ENCODE measurements at regions of chr10 and their contacts with region 1.

Region 1: GRCh38 chr10:117112220-117112619 is 25.9 kb downstream of the VAX1 start:
- DNase-seq: peak in 1 of 2 experiments; percentile 21
- ATAC-seq: peak; percentile 71 to 82; a peak in 4 of 6 replicates
- H3K4me3 ChIP-seq: no peak overlapping the region
- H3K27ac ChIP-seq: no peak overlapping the region
- H3K4me1 ChIP-seq: no peaks in the 10 kb centered on the region
- CTCF ChIP-seq: peak; percentile 52
- EP300 ChIP-seq: no peak
- POLR2A ChIP-seq: no peak
- RAD21 ChIP-seq: peak; percentile 37 to 55; a peak in 4 of 5 replicates

Region 2: GRCh38 chr10:117096599-117097201 is 15.5 kb before region 1 on chr10:
- CTCF ChIA-PET with region 1: interaction called, 20 read pairs
- POLR2A ChIA-PET with region 1: no interaction called
- DNase-seq: no peak
- ATAC-seq: no peak
- H3K4me3 ChIP-seq: no peak overlapping the region
- H3K27ac ChIP-seq: no peak overlapping the region
- H3K4me1 ChIP-seq: no peaks in the 10 kb centered on the region
- CTCF ChIP-seq: no peak
- EP300 ChIP-seq: no peak
- POLR2A ChIP-seq: no peak
- RAD21 ChIP-seq: no peak

Region 3: DNA sequence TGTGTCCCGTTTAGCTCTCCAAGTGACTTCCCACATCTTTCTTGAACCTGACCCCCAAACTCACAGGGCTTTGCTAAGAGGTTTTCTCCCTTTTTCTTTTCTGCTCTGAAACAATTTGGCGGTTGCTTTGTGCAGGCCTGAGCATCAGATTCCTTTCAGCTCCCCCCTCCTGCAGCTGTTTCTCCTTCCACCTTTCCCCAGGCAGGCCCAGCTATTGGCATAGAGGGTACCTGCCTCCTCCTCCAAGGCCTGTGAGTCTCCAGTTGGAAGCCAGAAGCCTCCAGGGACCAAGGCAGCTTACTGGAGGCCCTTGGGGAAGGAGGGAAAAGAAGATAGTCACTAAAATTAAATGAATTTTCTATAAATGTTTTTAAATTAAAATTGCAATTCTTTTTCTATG is 18.1 kb after region 1 on chr10:
- CTCF ChIA-PET with region 1: interaction called, 10 read pairs
- POLR2A ChIA-PET with region 1: no interaction called
- DNase-seq: no peak
- ATAC-seq: no peak
- H3K4me3 ChIP-seq: no peak overlapping the region
- H3K27ac ChIP-seq: no peak overlapping the region
- H3K4me1 ChIP-seq: no peaks in the 10 kb centered on the region
- CTCF ChIP-seq: no peak
- EP300 ChIP-seq: no peak
- POLR2A ChIP-seq: no peak
- RAD21 ChIP-seq: no peak